ENCODE measurements at regions of chr3 and their contacts with region 1.

Region 1: GRCh38 chr3:150763122-150763841 is at the start of gene SIAH2:
- DNase-seq: peak; percentile 96
- ATAC-seq: peak; percentile 77
- H3K4me3 ChIP-seq: peak within 1 kb of the TSS; percentile 89
- H3K27ac ChIP-seq: peak within 1 kb of the TSS; percentile 83
- H3K4me1 ChIP-seq: peaks cover 48% of the 10 kb centered on the region
- H3K27me3 ChIP-seq: no peaks in the 10 kb centered on the region
- CTCF ChIP-seq: no peak
- total RNA-seq, gene SIAH2: 37.8 and 51.8 TPM in 2 replicates

Region 2: GRCh38 chr3:150528354-150528797 is 234.9 kb before region 1 on chr3:
- CTCF ChIA-PET with region 1: no interaction called
- POLR2A ChIA-PET with region 1: no interaction called
- intact Hi-C with region 1: loop called (anchors 5 kb)
- DNase-seq: peak; percentile 56
- ATAC-seq: no peak; the same call in 1 of the 2 replicates
- H3K4me3 ChIP-seq: no peak overlapping the region
- H3K27ac ChIP-seq: no peak overlapping the region
- H3K4me1 ChIP-seq: no peaks in the 10 kb centered on the region
- H3K27me3 ChIP-seq: no peaks in the 10 kb centered on the region
- CTCF ChIP-seq: peak; percentile 61

Region 3: DNA sequence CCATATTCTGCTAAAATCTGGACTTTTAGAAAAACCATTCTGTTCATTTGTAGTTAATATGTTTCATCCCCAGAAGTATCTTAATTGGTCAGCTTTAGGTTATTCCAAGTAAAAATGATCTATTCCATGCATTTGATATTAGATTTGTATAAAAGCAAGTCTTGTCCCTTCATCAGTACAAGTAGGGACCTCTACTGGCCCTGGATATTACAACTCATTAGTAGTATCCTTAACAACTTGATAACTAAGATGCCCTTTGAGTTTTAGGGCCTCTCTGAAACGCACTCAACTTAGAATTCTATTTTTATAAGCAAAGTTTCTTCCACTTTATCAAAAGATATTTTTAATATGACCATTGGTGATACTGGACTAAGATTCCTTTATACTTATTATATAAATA is 185.4 kb before region 1 on chr3:
- CTCF ChIA-PET with region 1: no interaction called
- POLR2A ChIA-PET with region 1: interaction called, 13 read pairs
- intact Hi-C with region 1: no loop called
- DNase-seq: peak; percentile 18
- ATAC-seq: peak; percentile 62
- H3K4me3 ChIP-seq: no peak overlapping the region
- H3K27ac ChIP-seq: no peak overlapping the region
- H3K4me1 ChIP-seq: no peaks in the 10 kb centered on the region
- H3K27me3 ChIP-seq: no peaks in the 10 kb centered on the region
- CTCF ChIP-seq: peak; percentile 48

Region 4: DNA sequence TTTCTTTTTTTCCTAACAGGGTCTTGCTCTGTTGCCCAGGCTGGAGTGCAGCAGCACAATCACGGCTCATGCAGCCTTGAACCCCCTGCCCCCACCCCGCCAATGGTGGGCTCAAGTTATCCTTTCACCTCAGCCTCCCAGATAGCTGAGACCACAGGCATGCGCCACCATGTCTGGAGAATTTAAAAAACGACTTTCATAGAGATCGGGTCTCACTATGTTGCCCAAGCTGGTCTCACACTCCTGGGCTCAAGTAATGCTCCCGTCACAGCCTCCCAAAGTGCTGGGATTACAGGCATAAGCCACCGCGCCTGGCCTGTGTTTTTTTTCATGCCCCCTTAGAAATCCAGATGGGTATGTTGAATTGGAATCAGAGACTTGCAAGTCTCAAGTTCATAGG is 99.8 kb before region 1 on chr3:
- CTCF ChIA-PET with region 1: no interaction called
- POLR2A ChIA-PET with region 1: no interaction called
- intact Hi-C with region 1: no loop called
- DNase-seq: no peak
- ATAC-seq: no peak
- H3K4me3 ChIP-seq: no peak overlapping the region
- H3K27ac ChIP-seq: no peak overlapping the region
- H3K4me1 ChIP-seq: no peaks in the 10 kb centered on the region
- H3K27me3 ChIP-seq: peaks cover 7% of the 10 kb centered on the region; the same call in 1 of the 2 replicates
- CTCF ChIP-seq: no peak

Region 5: GRCh38 chr3:150675587-150675986 is 87.7 kb before region 1 on chr3:
- CTCF ChIA-PET with region 1: no interaction called
- POLR2A ChIA-PET with region 1: interaction called, 12 read pairs
- intact Hi-C with region 1: no loop called
- DNase-seq: no peak
- ATAC-seq: no peak
- H3K4me3 ChIP-seq: no peak overlapping the region
- H3K27ac ChIP-seq: no peak overlapping the region
- H3K4me1 ChIP-seq: no peaks in the 10 kb centered on the region
- H3K27me3 ChIP-seq: no peaks in the 10 kb centered on the region
- CTCF ChIP-seq: no peak

Region 6: GRCh38 chr3:150721285-150722130 is 41.8 kb before region 1 on chr3:
- CTCF ChIA-PET with region 1: interaction called, 3 read pairs
- POLR2A ChIA-PET with region 1: no interaction called
- intact Hi-C with region 1: loop called (anchors 1 kb)
- DNase-seq: peak; percentile 86
- ATAC-seq: peak; percentile 61
- H3K4me3 ChIP-seq: no peak overlapping the region
- H3K27ac ChIP-seq: no peak overlapping the region
- H3K4me1 ChIP-seq: peaks cover 13% of the 10 kb centered on the region
- H3K27me3 ChIP-seq: no peaks in the 10 kb centered on the region
- CTCF ChIP-seq: peak; percentile 94

Region 7: DNA sequence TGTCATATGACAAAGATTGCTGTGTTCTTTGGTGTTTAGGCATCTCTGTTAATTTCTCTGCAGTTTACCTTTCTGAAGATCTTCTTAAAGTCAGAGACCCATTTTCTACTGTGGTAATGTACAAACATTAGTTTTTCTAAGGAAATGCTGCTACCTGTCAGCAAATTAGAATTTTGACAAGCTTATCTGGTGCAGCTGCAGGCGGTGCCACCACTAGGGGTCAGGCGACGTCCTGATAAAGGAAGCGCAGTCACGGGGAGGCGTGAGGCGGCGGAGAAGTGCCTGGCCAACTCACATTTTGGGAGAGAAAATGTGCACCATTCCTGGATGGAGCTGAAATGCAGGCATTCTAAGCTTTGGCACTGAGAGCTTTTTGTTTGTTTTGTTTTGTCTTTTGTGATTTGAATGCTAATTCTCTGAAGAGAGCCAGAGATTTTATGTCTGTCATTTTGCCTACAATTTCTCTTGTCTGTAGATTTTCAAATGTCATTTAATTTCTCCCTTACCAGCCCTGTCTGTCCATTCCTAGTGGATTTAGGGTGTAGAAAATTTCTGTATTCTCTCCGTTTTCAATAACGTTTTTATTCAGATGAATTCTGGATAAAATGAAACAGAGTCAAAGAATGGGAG is 24.6 kb after region 1 on chr3:
- CTCF ChIA-PET with region 1: interaction called, 7 read pairs
- POLR2A ChIA-PET with region 1: interaction called, 11 read pairs
- intact Hi-C with region 1: loop called (anchors 2 kb)
- DNase-seq: peak; percentile 86
- ATAC-seq: peak; percentile 71
- H3K4me3 ChIP-seq: no peak overlapping the region
- H3K27ac ChIP-seq: no peak overlapping the region
- H3K4me1 ChIP-seq: peaks cover 45% of the 10 kb centered on the region
- H3K27me3 ChIP-seq: no peaks in the 10 kb centered on the region
- CTCF ChIP-seq: peak; percentile 98

Region 8: DNA sequence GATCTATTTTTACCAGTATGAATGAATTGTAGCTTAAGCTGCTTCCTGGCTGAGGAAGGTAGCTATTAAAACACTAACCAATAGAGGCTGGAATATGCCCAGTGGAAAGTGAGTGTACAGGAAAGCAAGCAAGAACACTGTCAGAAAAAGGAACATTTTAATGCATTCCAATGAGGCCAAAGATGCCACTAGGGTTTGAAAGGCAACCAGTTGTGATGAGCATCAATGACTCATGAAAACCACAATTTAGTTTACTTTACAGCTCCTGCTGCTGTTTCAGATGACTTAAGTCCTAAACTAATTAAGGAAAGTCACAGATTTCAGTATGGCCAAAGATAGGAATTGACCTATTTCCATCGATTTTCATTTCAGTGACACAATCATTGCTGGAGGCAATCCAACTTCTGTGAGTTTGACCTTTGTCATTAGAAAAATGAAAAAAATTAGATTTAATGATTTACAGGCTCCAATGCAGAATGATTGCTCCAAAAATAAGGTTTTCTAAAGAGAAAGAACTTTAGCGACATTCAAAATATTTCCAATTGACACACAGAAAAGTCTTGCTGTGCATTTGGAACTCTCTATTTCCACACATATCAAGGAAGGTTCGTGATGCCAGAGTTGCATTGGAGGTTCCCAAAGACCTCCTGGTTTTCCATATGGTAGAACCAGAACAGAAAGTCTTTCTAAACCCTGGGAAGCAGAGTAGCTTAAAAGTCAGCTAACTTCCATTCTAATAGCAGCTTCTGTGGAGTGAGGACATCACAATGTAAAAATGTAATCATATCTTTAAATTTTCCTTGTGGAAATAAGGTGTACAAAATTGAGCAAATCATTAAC is 1213.1 kb after region 1 on chr3:
- CTCF ChIA-PET with region 1: no interaction called
- POLR2A ChIA-PET with region 1: interaction called, 17 read pairs
- intact Hi-C with region 1: no loop called
- DNase-seq: peak; percentile 98
- ATAC-seq: peak; percentile 94
- H3K4me3 ChIP-seq: peak overlapping the region; percentile 30; the same call in 1 of the 2 replicates
- H3K27ac ChIP-seq: peak overlapping the region; percentile 88
- H3K4me1 ChIP-seq: peaks cover 58% of the 10 kb centered on the region
- H3K27me3 ChIP-seq: no peaks in the 10 kb centered on the region
- CTCF ChIP-seq: no peak; the same call in 1 of the 2 replicates

Measured in PC-3 (cell line).